Cardiac septum (tissue), 1 donor: ENCODE measurements at regions of chr9 and their contacts with region 1.

Region 1: DNA sequence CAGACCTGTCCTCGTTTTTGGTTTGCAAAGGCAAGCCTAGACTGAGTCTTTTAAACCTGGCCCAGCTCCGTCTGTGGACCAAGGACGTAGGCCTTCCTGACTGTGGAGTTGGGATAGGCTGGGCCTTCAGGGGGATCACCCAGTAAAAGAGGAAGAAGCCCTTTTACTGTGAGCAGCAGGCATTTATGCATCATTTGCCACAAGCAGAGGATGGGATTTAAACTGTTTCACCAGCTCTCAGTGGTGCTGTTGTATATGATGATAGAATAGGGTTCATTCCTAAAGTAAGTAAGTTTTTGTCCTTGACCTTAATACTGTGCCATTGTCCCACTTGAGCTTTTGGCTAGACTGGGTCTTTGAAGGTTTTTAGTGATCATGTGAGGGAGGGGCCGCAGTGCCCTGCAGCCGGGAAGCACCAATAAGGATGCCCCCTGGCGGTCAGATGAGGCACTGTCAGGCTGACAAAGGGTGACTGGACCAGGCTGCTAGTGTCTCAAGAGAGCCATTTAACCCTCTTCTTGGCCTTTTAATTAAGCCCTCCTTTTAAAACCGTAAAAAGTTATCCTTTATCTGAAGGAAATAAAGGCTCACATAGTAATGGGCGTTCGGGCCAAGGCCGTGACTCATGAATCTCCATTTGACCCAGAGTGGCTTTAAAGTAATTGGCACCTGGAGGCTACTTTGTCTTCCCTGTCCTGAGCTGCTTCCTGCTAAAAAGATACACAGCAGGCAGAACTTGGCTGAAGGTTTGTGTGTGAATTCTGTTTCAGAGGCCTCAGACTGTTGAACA is 74.0 kb downstream of the UBAP1 start:
- DNase-seq: peak; percentile 87

Region 2: GRCh38 chr9:33924978-33925797 is 327.7 kb before region 1 on chr9:
- intact Hi-C with region 1: loop called (anchors 10 kb)
- DNase-seq: no peak

Region 3: DNA sequence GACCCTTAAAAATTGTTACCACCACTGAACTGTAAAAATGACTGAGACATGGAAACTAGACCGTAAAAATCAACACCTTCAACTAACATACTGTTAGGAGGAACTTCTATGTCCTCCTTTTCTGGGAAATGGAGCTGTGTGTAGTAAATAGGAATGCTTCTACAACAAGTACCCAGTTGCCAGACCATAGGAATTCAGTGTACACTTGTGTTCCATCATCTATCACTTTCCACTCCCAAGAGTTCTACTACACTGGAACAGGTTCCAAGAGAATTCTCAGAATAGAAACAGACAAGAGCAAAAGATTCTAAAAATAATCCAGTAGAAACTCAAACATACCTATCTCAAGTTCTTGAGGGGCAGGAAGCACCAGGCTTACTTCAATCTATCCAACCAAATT is 227.8 kb before region 1 on chr9:
- intact Hi-C with region 1: loop called (anchors 5 kb)
- DNase-seq: no peak

Region 4: DNA sequence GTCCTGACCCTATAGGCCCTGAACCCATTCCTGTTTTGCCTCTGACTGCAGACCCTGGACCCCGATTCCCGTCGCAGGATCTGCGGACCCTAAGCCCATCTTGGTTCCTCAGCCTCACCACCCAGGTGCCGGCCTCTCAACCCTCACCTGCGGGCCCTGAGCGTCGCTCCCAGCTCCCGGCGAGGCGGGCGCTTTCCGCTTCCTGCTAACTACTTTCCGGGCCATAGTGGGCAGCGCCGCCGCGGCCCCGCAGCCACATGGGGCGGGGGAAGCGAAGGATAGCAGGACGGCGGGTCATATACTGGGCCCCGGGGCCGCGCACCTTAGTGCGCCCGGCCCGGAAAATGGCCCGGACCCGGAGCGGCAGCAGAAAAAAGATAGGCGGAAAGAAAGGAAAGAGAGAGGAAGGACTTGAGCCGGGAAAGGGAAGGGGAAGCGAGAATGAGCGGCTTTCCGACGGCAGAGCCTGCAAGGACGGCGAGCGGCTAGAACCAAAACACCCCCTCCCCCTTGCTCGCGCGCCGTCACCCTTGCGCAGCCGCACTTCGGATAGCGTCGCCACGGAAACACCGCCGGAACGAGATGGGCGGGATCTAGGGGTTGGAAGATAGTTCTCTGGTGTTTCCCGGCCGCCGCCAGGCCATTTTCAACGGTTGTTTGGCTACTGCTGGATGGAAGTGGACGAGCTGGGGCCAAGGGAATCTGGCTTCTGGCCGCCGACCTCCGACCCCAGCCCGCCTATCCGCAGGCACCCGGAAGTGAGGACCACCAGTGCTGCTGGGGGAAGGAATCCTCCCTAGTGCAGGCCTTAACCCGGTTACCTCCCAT is 126.4 kb before region 1 on chr9 and contains the start of gene DCAF12:
- intact Hi-C with region 1: loop called (anchors 5 kb)
- DNase-seq: peak; percentile 97
- total RNA-seq, gene DCAF12: 15.7 TPM

Region 5: GRCh38 chr9:34190996-34191892 is 61.6 kb before region 1 on chr9:
- intact Hi-C with region 1: no loop called
- DNase-seq: no peak

Region 6: DNA sequence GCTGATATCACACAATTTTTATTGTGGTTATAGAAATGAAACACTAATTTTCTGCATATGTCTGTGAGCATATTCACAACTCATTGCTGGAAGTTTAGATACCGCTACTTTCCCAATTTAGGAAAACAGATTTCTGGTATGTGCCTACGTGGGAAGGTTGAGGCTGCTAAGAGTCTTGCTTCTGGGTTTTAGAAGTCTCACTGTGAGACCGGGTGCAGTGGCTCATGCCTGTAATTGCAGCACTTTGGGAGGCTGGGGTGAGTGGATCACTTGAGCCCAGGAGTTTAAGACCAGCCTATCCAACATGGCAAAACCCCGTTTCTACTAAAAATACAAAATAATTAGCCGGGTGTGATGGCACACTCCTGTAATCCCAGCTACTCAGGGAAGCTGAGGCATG is 34.4 kb before region 1 on chr9:
- intact Hi-C with region 1: no loop called
- DNase-seq: no peak

Region 7: GRCh38 chr9:34379334-34380033 is 126.6 kb after region 1 on chr9:
- intact Hi-C with region 1: loop called (anchors 2 kb)
- DNase-seq: peak; percentile 95